CD14-positive monocyte (primary cell): ENCODE measurements at regions of chr6 and their contacts with region 1.

Region 1: DNA sequence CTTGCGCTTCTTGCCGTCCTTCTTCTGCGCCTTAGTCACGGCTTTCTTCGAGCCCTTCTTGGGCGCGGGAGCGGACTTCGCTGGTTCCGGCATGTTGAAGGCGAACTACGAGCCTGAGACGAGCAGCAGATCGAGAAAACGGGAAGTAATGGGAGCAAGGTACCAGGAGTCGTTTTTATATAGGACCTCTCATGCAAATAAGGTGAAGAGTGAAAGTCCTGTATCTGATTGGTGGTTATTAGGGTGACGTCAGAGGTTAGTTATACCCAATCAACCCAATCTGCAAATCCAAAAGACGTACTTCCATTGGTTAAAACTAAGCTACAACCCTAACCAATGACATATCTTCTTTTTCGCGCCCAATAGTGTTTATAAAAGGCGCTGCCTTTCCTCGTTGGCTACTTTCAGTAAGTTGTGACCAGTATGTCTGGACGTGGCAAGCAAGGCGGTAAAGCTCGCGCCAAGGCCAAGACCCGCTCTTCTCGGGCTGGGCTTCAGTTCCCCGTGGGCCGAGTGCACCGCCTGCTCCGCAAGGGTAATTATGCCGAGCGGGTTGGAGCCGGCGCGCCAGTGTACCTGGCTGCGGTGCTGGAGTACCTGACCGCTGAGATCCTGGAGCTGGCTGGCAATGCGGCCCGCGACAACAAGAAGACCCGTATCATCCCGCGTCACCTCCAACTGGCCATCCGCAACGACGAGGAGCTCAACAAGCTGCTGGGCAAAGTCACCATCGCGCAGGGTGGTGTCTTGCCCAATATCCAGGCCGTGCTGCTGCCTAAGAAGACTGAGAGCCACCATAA is 100.6 kb upstream of the PRSS16 start:
- DNase-seq: peak; percentile 97 to 100 (median 99)
- H3K4me3 ChIP-seq: peak overlapping the region; percentile 71 to 100 (median 97)
- H3K4me3 Mint-ChIP-seq: no peak overlapping the region
- H3K27ac ChIP-seq: peak overlapping the region; percentile 89 to 95
- H3K27ac Mint-ChIP-seq: no peak overlapping the region
- H3K4me1 ChIP-seq: peaks cover 24 to 37% of the 10 kb centered on the region in 2 donors
- H3K4me1 Mint-ChIP-seq: peaks cover 6% of the 10 kb centered on the region
- H3K27me3 ChIP-seq: no peaks in the 10 kb centered on the region
- H3K27me3 Mint-ChIP-seq: peaks cover 0 to 2% (median 0%) of the 10 kb centered on the region in 3 donors
- CTCF ChIP-seq: no peak

Region 2: GRCh38 chr6:26596579-26597388 is 550.1 kb before region 1 on chr6 and contains the start of gene ABT1:
- intact Hi-C with region 1: loop called in 1 of 2 experiments (anchors 10 kb)
- DNase-seq: peak; percentile 96 to 99 (median 99)
- H3K4me3 ChIP-seq: peak within 1 kb of the TSS; percentile 83 to 94 (median 90)
- H3K4me3 Mint-ChIP-seq: no peak within 1 kb of the TSS
- H3K27ac ChIP-seq: peak within 1 kb of the TSS; percentile 82 to 95
- H3K27ac Mint-ChIP-seq: peak within 1 kb of the TSS in 1 of 7 donors; percentile 65
- H3K4me1 ChIP-seq: peaks cover 17 to 39% of the 10 kb centered on the region in 2 donors
- H3K4me1 Mint-ChIP-seq: peaks cover 26% of the 10 kb centered on the region
- H3K27me3 ChIP-seq: peaks cover 19 to 31% of the 10 kb centered on the region in 2 donors
- H3K27me3 Mint-ChIP-seq: peaks cover 19 to 22% (median 19%) of the 10 kb centered on the region in 3 donors
- CTCF ChIP-seq: no peak
- polyA plus RNA-seq, gene ABT1: 11.6 to 40.6 (median 31.7) TPM

Region 3: DNA sequence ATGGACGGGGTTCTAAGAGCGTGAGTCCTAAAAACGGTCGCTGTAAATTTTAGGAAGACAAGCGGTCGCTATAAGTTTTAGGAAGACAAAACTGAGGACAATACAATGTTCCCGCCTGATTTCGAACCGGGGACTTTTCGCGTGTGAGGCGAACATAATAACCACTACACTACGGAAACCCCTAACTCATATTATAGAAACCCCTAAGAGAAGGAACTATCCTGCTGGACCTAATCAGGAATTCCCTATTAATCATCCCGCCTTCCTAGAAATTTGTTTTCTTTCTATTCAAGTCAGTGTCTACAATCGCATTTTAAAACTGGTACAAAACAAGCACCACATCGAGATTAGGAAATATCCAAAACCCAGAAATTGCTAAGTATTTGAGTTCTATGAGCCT is 581.5 kb after region 1 on chr6:
- intact Hi-C with region 1: no loop called
- DNase-seq: no peak
- H3K4me3 ChIP-seq: no peak overlapping the region
- H3K4me3 Mint-ChIP-seq: no peak overlapping the region
- H3K27ac ChIP-seq: no peak overlapping the region
- H3K27ac Mint-ChIP-seq: no peak overlapping the region
- H3K4me1 ChIP-seq: no peaks in the 10 kb centered on the region
- H3K4me1 Mint-ChIP-seq: no peaks in the 10 kb centered on the region
- H3K27me3 ChIP-seq: peaks cover 2% of the 10 kb centered on the region in 2 donors
- H3K27me3 Mint-ChIP-seq: peaks cover 12 to 33% (median 18%) of the 10 kb centered on the region in 3 donors
- CTCF ChIP-seq: no peak